ENCODE measurements at regions of chr15 and their contacts with region 1.

Region 1: GRCh38 chr15:90716976-90717821 is at the start of gene BLM:
- DNase-seq: peak; percentile 98 to 100
- ATAC-seq: peak; percentile 99 to 100
- H3K4me3 ChIP-seq: peak within 1 kb of the TSS; percentile 72
- H3K27ac ChIP-seq: peak within 1 kb of the TSS; percentile 81 to 84
- H3K4me1 ChIP-seq: peaks cover 12% of the 10 kb centered on the region; the same call in 1 of the 3 replicates
- CTCF ChIP-seq: no peak
- EP300 ChIP-seq: no peak
- POLR2A ChIP-seq: peak; percentile 64
- RAD21 ChIP-seq: 0 out of 5 replicates have a peak, but pooled peaks of 1 of the 2 experiments have one; percentile 9
- polyA plus RNA-seq, gene BLM: 14.5 and 15.2 TPM in 2 replicates

Region 2: GRCh38 chr15:90376789-90377188 is 340.4 kb before region 1 on chr15:
- CTCF ChIA-PET with region 1: no interaction called
- POLR2A ChIA-PET with region 1: no interaction called
- DNase-seq: no peak
- ATAC-seq: no peak
- H3K4me3 ChIP-seq: no peak overlapping the region
- H3K27ac ChIP-seq: no peak overlapping the region
- H3K4me1 ChIP-seq: peaks cover 3% of the 10 kb centered on the region; the same call in 1 of the 3 replicates
- CTCF ChIP-seq: no peak
- EP300 ChIP-seq: no peak
- POLR2A ChIP-seq: no peak
- RAD21 ChIP-seq: no peak

Region 3: DNA sequence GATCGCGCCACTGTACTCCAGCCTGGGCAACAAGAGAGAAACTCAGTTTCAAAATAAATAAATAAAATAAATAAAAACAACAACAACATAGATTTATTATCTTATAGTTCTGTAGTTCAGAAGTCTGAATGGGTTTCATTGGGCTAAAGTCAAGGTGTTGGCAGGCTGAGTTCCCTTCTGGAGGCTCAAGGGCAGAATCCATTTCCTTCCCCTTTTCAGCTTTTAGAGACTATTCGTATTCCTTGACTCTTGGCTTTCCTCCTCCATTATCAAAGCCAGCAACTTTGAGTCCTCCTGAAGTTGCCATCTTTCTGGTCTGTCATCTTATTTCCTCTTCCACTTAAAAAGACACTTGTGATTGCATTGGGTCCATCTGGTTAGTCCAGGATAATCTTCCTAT is 12.1 kb after region 1 on chr15:
- CTCF ChIA-PET with region 1: interaction called, 14 read pairs
- POLR2A ChIA-PET with region 1: interaction called, 4 read pairs
- DNase-seq: no peak
- ATAC-seq: no peak
- H3K4me3 ChIP-seq: no peak overlapping the region
- H3K27ac ChIP-seq: no peak overlapping the region
- H3K4me1 ChIP-seq: no peaks in the 10 kb centered on the region
- CTCF ChIP-seq: no peak
- EP300 ChIP-seq: no peak
- POLR2A ChIP-seq: no peak
- RAD21 ChIP-seq: no peak

Region 4: GRCh38 chr15:90742087-90742486 is 24.9 kb after region 1 on chr15:
- CTCF ChIA-PET with region 1: no interaction called
- POLR2A ChIA-PET with region 1: no interaction called
- DNase-seq: no peak
- ATAC-seq: no peak
- H3K4me3 ChIP-seq: no peak overlapping the region
- H3K27ac ChIP-seq: no peak overlapping the region
- H3K4me1 ChIP-seq: no peaks in the 10 kb centered on the region
- CTCF ChIP-seq: no peak
- EP300 ChIP-seq: no peak
- POLR2A ChIP-seq: no peak
- RAD21 ChIP-seq: no peak

Region 5: DNA sequence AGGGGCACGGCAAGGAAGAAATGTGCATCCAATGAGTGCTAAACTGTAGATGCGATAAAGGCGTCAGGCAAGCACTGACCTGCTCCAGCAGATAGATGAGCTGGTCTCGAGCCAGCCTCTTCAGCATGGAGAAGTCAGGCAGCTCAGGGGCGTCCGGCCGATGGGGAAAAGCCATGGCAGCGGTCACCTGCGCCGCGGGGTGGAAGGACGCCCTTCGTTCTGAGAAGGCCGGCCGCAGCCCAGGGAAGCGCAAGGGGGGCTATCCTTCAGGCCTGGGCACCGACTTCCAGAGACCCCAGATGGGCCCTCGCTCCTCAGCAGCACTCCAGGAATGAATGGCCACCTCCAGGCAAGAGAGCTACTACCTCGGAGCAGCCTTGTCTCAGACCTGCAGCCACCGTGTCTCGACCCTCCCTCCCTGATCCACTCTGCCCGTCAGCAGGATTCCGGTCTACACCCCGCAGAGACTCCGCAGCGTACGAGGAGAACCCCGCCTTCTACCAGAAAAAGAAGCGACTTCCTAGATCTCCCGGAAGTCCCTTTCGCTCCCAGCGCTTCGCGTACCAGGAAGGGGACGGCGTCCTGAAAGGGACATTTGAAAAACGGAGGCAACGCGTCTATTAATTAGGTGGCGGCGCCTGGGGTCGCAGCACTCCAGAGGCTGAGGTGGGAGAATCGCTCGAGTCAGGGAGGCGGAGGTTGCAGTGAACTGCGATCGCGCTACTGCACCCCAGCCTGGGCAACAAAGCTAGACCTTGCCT is 305.1 kb after region 1 on chr15 and contains the start of gene VPS33B:
- CTCF ChIA-PET with region 1: no interaction called
- POLR2A ChIA-PET with region 1: interaction called, 10 read pairs
- DNase-seq: peak; percentile 86 to 91
- ATAC-seq: peak; percentile 94 to 96
- H3K4me3 ChIP-seq: peak within 1 kb of the TSS; percentile 89
- H3K27ac ChIP-seq: peak within 1 kb of the TSS; percentile 88 to 91
- H3K4me1 ChIP-seq: peaks cover 16% of the 10 kb centered on the region
- CTCF ChIP-seq: no peak
- EP300 ChIP-seq: no peak
- POLR2A ChIP-seq: peak; percentile 84
- RAD21 ChIP-seq: no peak
- polyA plus RNA-seq, gene VPS33B: 17.9 and 25.0 TPM in 2 replicates

Measured in A549 (cell line).